OCI-LY7 (cell line): ENCODE measurements at regions of chr3 and their contacts with region 1.

Region 1: DNA sequence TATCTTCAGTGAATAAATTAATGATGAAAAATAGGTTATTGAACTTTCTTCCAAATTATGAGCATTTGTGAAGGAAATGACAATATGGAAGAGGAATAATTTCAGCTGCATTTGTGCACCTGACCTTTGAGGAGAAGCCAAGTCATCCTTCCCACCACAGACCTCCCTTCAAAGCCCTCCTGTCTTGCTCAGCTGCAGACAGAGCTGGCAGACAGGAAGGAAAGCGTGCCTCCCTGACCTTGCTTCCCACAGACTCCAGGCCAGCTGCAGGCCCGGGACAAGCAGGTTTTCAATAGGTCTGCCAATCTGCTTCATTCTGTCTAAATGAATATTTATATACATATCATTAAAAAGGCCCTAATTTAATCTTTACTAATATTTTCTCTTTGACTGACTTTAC is 152.9 kb upstream of the RBMS3 start:
- DNase-seq: no peak
- H3K4me3 ChIP-seq: no peak overlapping the region
- H3K27ac ChIP-seq: no peak overlapping the region
- H3K4me1 ChIP-seq: no peaks in the 10 kb centered on the region
- CTCF ChIP-seq: no peak

Region 2: GRCh38 chr3:28824316-28824715 is 303.7 kb before region 1 on chr3:
- CTCF ChIA-PET with region 1: no interaction called
- POLR2A ChIA-PET with region 1: no interaction called
- intact Hi-C with region 1: no loop called
- DNase-seq: no peak
- H3K4me3 ChIP-seq: no peak overlapping the region
- H3K27ac ChIP-seq: no peak overlapping the region
- H3K4me1 ChIP-seq: no peaks in the 10 kb centered on the region
- CTCF ChIP-seq: no peak

Region 3: DNA sequence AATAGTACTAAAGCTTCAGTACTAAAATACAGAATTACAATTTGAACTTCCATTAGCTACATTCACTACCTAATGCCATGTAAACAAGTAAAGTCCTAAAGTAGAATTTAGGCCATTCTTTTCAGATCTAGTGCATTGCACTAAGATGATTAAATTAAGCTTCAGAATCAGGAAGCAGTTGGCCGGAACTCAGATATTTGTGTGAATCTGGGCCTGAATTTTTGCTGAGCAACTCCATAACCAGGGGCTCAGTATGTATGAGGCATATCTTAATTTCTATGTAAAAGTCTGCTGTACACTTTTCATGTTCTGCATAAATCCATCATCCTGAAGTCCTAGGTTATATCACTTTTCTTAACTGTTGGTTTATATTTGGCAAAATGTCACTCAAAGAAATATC is 399.2 kb after region 1 on chr3:
- CTCF ChIA-PET with region 1: no interaction called
- POLR2A ChIA-PET with region 1: interaction called, 10 read pairs
- intact Hi-C with region 1: no loop called
- DNase-seq: no peak
- H3K4me3 ChIP-seq: no peak overlapping the region
- H3K27ac ChIP-seq: no peak overlapping the region
- H3K4me1 ChIP-seq: peaks cover 5% of the 10 kb centered on the region
- CTCF ChIP-seq: no peak